ENCODE measurements at regions of chr5 and their contacts with region 1.

Region 1: GRCh38 chr5:55096861-55097260 is 5.6 kb upstream of the GZMA start:
- DNase-seq: peak; percentile 56 to 72 (median 63)
- H3K4me3 ChIP-seq: peak overlapping the region in 1 of 2 donors; percentile 47
- H3K4me3 Mint-ChIP-seq: peak overlapping the region; percentile 20 to 89 (median 69)
- H3K27ac ChIP-seq: no peak overlapping the region
- H3K27ac Mint-ChIP-seq: peak overlapping the region; percentile 74 to 96 (median 90)
- H3K4me1 ChIP-seq: peaks cover 65% of the 10 kb centered on the region
- H3K4me1 Mint-ChIP-seq: peaks cover 72 to 92% (median 82%) of the 10 kb centered on the region in 4 donors
- H3K27me3 ChIP-seq: no peaks in the 10 kb centered on the region
- H3K27me3 Mint-ChIP-seq: no peaks in the 10 kb centered on the region

Region 2: DNA sequence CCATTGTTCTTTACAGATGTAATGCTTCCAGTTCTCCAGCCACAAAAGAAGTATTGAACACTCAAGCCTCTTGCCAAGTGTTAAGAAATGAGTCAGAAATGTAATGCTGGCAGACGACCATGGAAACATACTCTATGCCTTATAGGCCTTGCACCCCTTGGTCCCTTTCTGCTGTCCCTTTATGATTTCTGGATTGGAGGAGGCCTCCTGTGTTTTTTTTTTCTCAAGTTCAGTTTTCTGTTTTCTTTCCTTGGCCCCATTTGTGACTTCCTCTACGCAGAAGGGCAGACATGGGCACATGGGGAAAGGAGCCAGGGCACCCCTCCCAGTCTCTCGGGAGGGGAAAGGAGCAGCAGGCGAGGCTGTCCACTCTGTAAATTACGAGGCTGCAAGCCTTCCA is 525.9 kb before region 1 on chr5:
- CTCF ChIA-PET with region 1: no interaction called
- POLR2A ChIA-PET with region 1: no interaction called
- intact Hi-C with region 1: no loop called
- DNase-seq: no peak
- H3K4me3 ChIP-seq: no peak overlapping the region
- H3K4me3 Mint-ChIP-seq: no peak overlapping the region
- H3K27ac ChIP-seq: no peak overlapping the region
- H3K27ac Mint-ChIP-seq: no peak overlapping the region
- H3K4me1 ChIP-seq: peaks cover 6% of the 10 kb centered on the region
- H3K4me1 Mint-ChIP-seq: peaks cover 8 to 19% (median 10%) of the 10 kb centered on the region in 4 donors
- H3K27me3 ChIP-seq: no peaks in the 10 kb centered on the region
- H3K27me3 Mint-ChIP-seq: no peaks in the 10 kb centered on the region

Region 3: DNA sequence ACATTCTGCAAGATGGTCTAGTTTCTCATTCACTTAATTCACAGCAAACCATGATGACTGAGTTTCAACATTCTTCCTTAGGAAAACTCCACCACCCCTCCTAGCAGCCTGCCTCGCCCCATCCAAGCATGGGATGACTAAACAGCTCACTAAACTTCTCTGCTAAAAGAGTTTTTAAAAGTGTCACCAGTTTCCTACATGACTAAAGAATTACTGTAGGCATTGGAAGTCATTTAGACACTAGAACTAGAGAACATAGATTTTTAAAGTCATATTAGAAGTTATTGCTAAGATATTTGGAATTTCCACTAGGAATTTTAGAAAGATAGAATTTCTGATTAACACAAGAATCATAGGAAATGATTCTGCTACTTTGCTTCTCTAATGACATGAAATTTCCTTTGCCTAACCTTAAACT is 106.0 kb before region 1 on chr5:
- CTCF ChIA-PET with region 1: no interaction called
- POLR2A ChIA-PET with region 1: interaction called, 10 read pairs
- intact Hi-C with region 1: no loop called
- DNase-seq: no peak
- H3K4me3 ChIP-seq: no peak overlapping the region
- H3K4me3 Mint-ChIP-seq: peak overlapping the region in 2 of 8 donors; percentile 7 to 52
- H3K27ac ChIP-seq: no peak overlapping the region
- H3K27ac Mint-ChIP-seq: no peak overlapping the region
- H3K4me1 ChIP-seq: peaks cover 49% of the 10 kb centered on the region
- H3K4me1 Mint-ChIP-seq: peaks cover 32 to 75% (median 50%) of the 10 kb centered on the region in 4 donors
- H3K27me3 ChIP-seq: no peaks in the 10 kb centered on the region
- H3K27me3 Mint-ChIP-seq: no peaks in the 10 kb centered on the region

Region 4: DNA sequence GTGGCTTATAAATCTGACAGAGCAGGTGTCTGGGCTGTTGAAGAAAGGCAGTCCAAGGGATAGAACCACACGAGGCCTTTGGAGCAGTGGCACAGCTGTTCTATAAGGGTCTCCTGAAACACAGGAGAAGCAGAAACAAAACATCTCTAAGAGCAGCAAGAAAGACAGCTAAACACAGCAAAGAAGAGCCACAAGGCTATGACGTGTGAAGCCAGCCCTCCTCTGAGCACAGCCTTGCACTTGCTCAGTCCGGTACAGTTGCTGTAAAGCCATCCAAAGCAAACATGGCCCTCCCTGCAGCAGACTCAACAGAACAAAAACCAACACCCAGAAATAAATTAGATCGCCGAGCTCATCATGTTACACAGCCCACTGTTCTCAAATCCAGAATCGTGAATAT is 75.5 kb before region 1 on chr5:
- CTCF ChIA-PET with region 1: interaction called, 6 read pairs
- POLR2A ChIA-PET with region 1: interaction called, 16 read pairs
- intact Hi-C with region 1: loop called (anchors 5 kb)
- DNase-seq: no peak
- H3K4me3 ChIP-seq: no peak overlapping the region
- H3K4me3 Mint-ChIP-seq: peak overlapping the region in 6 of 8 donors; percentile 3 to 71 (median 46)
- H3K27ac ChIP-seq: no peak overlapping the region
- H3K27ac Mint-ChIP-seq: peak overlapping the region in 6 of 7 donors; percentile 49 to 92 (median 77)
- H3K4me1 ChIP-seq: peaks cover 46% of the 10 kb centered on the region
- H3K4me1 Mint-ChIP-seq: peaks cover 31 to 65% (median 50%) of the 10 kb centered on the region in 4 donors
- H3K27me3 ChIP-seq: no peaks in the 10 kb centered on the region
- H3K27me3 Mint-ChIP-seq: no peaks in the 10 kb centered on the region

Region 5: GRCh38 chr5:55027595-55027994 is 69.3 kb before region 1 on chr5:
- CTCF ChIA-PET with region 1: interaction called, 6 read pairs
- POLR2A ChIA-PET with region 1: interaction called, 16 read pairs
- intact Hi-C with region 1: loop called (anchors 5 kb)
- DNase-seq: peak; percentile 11 to 66 (median 24)
- H3K4me3 ChIP-seq: peak overlapping the region in 1 of 2 donors; percentile 4
- H3K4me3 Mint-ChIP-seq: peak overlapping the region; percentile 48 to 89 (median 72)
- H3K27ac ChIP-seq: peak overlapping the region; percentile 36
- H3K27ac Mint-ChIP-seq: peak overlapping the region; percentile 18 to 86 (median 77)
- H3K4me1 ChIP-seq: peaks cover 77% of the 10 kb centered on the region
- H3K4me1 Mint-ChIP-seq: peaks cover 51 to 95% (median 71%) of the 10 kb centered on the region in 4 donors
- H3K27me3 ChIP-seq: no peaks in the 10 kb centered on the region
- H3K27me3 Mint-ChIP-seq: no peaks in the 10 kb centered on the region

Region 6: GRCh38 chr5:55062039-55062779 is 34.7 kb before region 1 on chr5:
- CTCF ChIA-PET with region 1: interaction called, 11 read pairs
- POLR2A ChIA-PET with region 1: interaction called, 55 read pairs
- intact Hi-C with region 1: loop called (anchors 1 kb)
- DNase-seq: peak; percentile 42 to 63 (median 57)
- H3K4me3 ChIP-seq: peak overlapping the region; percentile 2 to 41
- H3K4me3 Mint-ChIP-seq: peak overlapping the region; percentile 82 to 91 (median 88)
- H3K27ac ChIP-seq: peak overlapping the region; percentile 1
- H3K27ac Mint-ChIP-seq: peak overlapping the region; percentile 50 to 92 (median 80)
- H3K4me1 ChIP-seq: peaks cover 38% of the 10 kb centered on the region
- H3K4me1 Mint-ChIP-seq: peaks cover 38 to 64% (median 50%) of the 10 kb centered on the region in 4 donors
- H3K27me3 ChIP-seq: no peaks in the 10 kb centered on the region
- H3K27me3 Mint-ChIP-seq: no peaks in the 10 kb centered on the region

Region 7: GRCh38 chr5:55072666-55073065 is 24.2 kb before region 1 on chr5:
- CTCF ChIA-PET with region 1: interaction called, 8 read pairs
- POLR2A ChIA-PET with region 1: interaction called, 16 read pairs
- intact Hi-C with region 1: loop called (anchors 2 kb)
- DNase-seq: peak in 4 of 5 donors; percentile 38 to 59 (median 44)
- H3K4me3 ChIP-seq: no peak overlapping the region
- H3K4me3 Mint-ChIP-seq: peak overlapping the region; percentile 8 to 84 (median 56)
- H3K27ac ChIP-seq: peak overlapping the region; percentile 17
- H3K27ac Mint-ChIP-seq: peak overlapping the region; percentile 20 to 88 (median 78)
- H3K4me1 ChIP-seq: peaks cover 39% of the 10 kb centered on the region
- H3K4me1 Mint-ChIP-seq: peaks cover 25 to 48% (median 30%) of the 10 kb centered on the region in 4 donors
- H3K27me3 ChIP-seq: no peaks in the 10 kb centered on the region
- H3K27me3 Mint-ChIP-seq: no peaks in the 10 kb centered on the region

Region 8: GRCh38 chr5:55108661-55109060 is 11.8 kb after region 1 on chr5:
- CTCF ChIA-PET with region 1: interaction called, 11 read pairs
- POLR2A ChIA-PET with region 1: interaction called, 27 read pairs
- intact Hi-C with region 1: no loop called
- DNase-seq: no peak
- H3K4me3 ChIP-seq: no peak overlapping the region
- H3K4me3 Mint-ChIP-seq: peak overlapping the region in 1 of 8 donors; percentile 23
- H3K27ac ChIP-seq: no peak overlapping the region
- H3K27ac Mint-ChIP-seq: peak overlapping the region in 1 of 7 donors; percentile 27
- H3K4me1 ChIP-seq: peaks cover 32% of the 10 kb centered on the region
- H3K4me1 Mint-ChIP-seq: peaks cover 32 to 56% (median 39%) of the 10 kb centered on the region in 4 donors
- H3K27me3 ChIP-seq: no peaks in the 10 kb centered on the region
- H3K27me3 Mint-ChIP-seq: no peaks in the 10 kb centered on the region